Activated naive CD4-positive, alpha-beta T cell treated with anti-CD3 and anti-CD28 coated beads for 36 hours (primary cell): ENCODE measurements at regions of chr15 and their contacts with region 1.

Region 1: DNA sequence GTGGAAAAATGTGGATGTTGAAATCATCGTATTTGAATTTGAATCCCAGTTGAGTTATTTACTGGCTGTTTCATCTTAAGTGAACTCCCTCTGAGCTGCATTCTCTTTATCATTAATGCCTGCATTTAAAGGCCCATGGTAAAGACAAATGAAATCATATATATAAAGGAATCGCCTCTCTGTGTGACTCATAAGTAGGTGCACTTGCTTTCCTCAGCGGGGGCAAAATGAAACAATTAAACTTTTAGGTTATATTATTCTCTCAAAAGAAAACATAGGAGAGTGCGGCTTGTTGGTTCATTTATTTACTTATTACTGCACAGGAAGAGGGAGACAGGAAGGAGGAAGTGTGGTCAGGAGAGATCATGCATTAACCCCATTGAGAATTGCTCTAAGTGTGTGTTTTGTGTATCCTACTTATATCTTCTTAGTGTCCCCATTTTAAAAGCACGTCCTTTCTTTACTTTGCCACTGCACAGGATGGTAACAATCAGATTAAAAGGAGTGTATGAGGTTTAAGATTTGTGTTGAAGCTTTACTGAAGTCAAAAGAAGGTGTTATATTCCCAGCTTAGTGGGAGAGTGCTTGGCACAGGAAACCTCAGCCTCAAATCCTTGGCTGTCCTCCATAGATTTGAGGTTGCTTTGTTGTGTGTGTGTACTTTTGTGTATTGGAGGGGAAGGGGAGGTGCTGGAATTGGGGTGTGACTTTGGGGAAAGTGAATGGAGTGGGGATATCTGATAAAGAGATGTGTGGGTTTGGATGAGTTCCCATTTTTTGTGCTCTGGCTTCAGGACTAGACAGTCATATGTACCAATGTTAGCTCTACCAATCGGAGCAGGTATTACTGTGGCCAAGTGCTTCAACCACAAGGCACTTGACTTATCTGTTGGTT is 595.8 kb upstream of the NR2F2 start:
- DNase-seq: peak; percentile 11
- H3K4me3 Mint-ChIP-seq: no peak overlapping the region
- H3K27ac Mint-ChIP-seq: peak overlapping the region; percentile 29
- H3K4me1 Mint-ChIP-seq: peaks cover 33% of the 10 kb centered on the region
- H3K27me3 Mint-ChIP-seq: no peaks in the 10 kb centered on the region

Region 2: DNA sequence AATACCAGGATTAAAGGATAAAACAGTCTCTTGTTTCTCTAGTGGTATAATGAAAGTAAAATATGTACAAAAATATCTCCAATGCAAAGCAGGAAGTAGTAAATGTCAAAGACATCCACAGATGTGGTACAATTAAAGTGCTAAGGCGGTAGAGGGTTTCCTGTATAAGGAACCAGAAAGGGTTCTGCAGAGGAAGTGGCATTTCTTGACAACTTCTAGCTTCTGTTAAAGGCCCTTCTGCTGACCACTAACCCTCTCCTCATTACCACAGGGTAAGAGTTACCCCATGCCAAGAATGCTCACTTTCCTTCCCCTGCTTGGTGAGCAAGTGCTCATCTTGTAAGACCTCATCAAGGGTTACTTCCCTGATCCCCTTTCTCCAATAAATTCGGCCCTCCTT is 287.8 kb before region 1 on chr15:
- CTCF ChIA-PET with region 1: no interaction called
- intact Hi-C with region 1: loop called (anchors 10 kb)
- DNase-seq: peak; percentile 8
- H3K4me3 Mint-ChIP-seq: no peak overlapping the region
- H3K27ac Mint-ChIP-seq: no peak overlapping the region
- H3K4me1 Mint-ChIP-seq: peaks cover 21% of the 10 kb centered on the region
- H3K27me3 Mint-ChIP-seq: peaks cover 3% of the 10 kb centered on the region

Region 3: GRCh38 chr15:95620934-95621579 is 113.6 kb before region 1 on chr15:
- CTCF ChIA-PET with region 1: no interaction called
- intact Hi-C with region 1: loop called (anchors 5 kb)
- DNase-seq: peak; percentile 18
- H3K4me3 Mint-ChIP-seq: no peak overlapping the region
- H3K27ac Mint-ChIP-seq: peak overlapping the region; percentile 28
- H3K4me1 Mint-ChIP-seq: peaks cover 18% of the 10 kb centered on the region
- H3K27me3 Mint-ChIP-seq: no peaks in the 10 kb centered on the region

Region 4: DNA sequence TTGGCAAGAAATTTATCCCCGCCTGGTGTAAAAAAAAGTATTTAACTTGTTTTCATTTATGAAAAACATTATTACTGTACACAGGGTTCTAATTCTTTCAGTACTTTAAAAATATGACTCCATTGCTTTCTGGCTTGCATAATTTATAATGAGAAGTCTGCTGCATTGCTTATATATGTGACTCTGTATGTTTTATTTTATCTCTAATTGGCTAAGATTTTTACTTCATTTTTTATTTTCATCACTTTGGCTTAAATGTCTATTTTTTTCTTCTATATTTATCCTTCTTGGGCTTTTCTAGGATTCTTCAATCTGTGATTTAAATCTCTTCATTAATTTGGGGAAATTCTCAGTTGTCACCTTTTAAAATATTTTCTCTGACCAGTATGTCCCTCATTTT is 40.8 kb before region 1 on chr15:
- CTCF ChIA-PET with region 1: no interaction called
- intact Hi-C with region 1: no loop called
- DNase-seq: no peak
- H3K4me3 Mint-ChIP-seq: no peak overlapping the region
- H3K27ac Mint-ChIP-seq: no peak overlapping the region
- H3K4me1 Mint-ChIP-seq: no peaks in the 10 kb centered on the region
- H3K27me3 Mint-ChIP-seq: peaks cover under 1% of the 10 kb centered on the region